Ovary (tissue), 10 donors: ENCODE measurements at regions of chr14 and their contacts with region 1.

Region 1: DNA sequence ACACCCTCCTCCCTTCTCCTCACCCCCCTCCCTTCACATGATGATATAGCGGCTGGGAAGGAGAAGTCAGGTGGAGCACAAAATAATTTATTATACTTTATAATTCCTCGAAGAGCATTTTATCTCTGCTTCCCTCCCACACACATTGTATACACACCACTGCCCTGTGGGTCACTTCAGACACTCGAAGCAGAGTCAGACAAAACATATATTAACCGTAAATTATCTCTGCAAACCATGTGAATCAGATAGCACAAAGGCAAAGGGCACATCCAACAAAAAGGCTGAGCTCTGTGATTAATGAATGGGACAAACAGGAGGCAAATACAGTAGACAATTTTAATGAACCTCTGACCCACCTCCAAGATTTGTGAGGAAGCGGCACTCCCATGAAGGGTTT is 450.7 kb downstream of the GALC start:
- DNase-seq: no peak
- H3K4me3 ChIP-seq: no peak overlapping the region
- H3K27ac ChIP-seq: no peak overlapping the region
- H3K4me1 ChIP-seq: no peaks in the 10 kb centered on the region
- H3K27me3 ChIP-seq: no peaks in the 10 kb centered on the region
- CTCF ChIP-seq: no peak
- EP300 ChIP-seq: no peak
- POLR2A ChIP-seq: no peak

Region 2: GRCh38 chr14:87073880-87074570 is 468.3 kb before region 1 on chr14:
- intact Hi-C with region 1: loop called in 1 of 4 experiments (anchors 5 kb)
- DNase-seq: no peak
- H3K4me3 ChIP-seq: no peak overlapping the region
- H3K27ac ChIP-seq: no peak overlapping the region
- H3K4me1 ChIP-seq: no peaks in the 10 kb centered on the region
- H3K27me3 ChIP-seq: no peaks in the 10 kb centered on the region
- CTCF ChIP-seq: no peak
- EP300 ChIP-seq: no peak
- POLR2A ChIP-seq: no peak

Region 3: DNA sequence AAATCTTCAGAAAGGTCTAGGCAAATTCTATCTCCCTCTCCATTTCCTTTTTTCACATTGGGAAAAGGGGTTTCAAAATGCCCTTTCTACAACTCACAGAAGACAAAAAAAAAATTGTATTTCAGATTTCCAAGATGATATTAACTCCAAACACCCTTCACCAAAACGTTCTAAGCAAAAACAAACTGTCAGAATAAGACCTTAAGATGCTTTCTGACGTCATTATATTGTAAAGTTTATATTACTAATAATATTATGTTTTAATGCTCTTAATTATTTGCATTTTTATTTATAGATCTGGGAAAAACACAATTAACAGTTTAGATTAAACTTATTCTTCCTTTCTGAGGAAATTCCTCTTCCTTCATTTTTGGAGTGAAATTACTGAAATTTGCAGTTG is 173.5 kb before region 1 on chr14:
- intact Hi-C with region 1: no loop called
- DNase-seq: no peak
- H3K4me3 ChIP-seq: no peak overlapping the region
- H3K27ac ChIP-seq: no peak overlapping the region
- H3K4me1 ChIP-seq: no peaks in the 10 kb centered on the region
- H3K27me3 ChIP-seq: no peaks in the 10 kb centered on the region
- CTCF ChIP-seq: no peak
- EP300 ChIP-seq: no peak
- POLR2A ChIP-seq: no peak

Region 4: DNA sequence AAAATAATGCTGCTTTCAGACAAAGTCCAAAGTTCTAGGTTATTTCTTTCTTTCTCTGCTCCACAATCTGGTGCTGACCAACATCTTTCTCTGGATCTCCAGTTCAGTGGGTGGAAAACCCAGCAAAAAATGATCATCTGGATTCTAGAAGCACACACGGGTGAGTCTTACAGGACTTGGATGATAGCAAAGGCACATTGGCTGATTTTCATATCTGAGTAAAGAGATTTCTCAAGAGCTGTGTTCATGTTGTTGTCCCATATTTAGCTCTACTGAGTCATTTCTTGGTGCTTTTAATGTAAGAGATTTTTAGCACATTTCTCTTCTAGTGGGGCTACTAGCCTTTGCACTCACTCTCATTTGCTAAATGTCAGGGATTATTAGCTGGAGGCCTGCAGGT is 114.0 kb after region 1 on chr14:
- intact Hi-C with region 1: no loop called
- DNase-seq: no peak
- H3K4me3 ChIP-seq: no peak overlapping the region
- H3K27ac ChIP-seq: no peak overlapping the region
- H3K4me1 ChIP-seq: no peaks in the 10 kb centered on the region
- H3K27me3 ChIP-seq: no peaks in the 10 kb centered on the region
- CTCF ChIP-seq: no peak
- EP300 ChIP-seq: no peak
- POLR2A ChIP-seq: no peak